K562 (cell line): ENCODE measurements at regions of chr20 and their contacts with region 1.

Region 1: GRCh38 chr20:10524643-10525042 is 89.5 kb downstream of the SLX4IP start:
- DNase-seq: no peak
- ATAC-seq: no peak
- H3K4me3 ChIP-seq: no peak overlapping the region
- H3K27ac ChIP-seq: no peak overlapping the region
- H3K4me1 ChIP-seq: peaks cover 0 to 7% of the 10 kb centered on the region in 2 experiments; a peak in 2 of 5 replicates
- H3K27me3 ChIP-seq: no peaks in the 10 kb centered on the region
- CTCF ChIP-seq: no peak
- EP300 ChIP-seq: no peak
- POLR2A ChIP-seq: no peak
- RAD21 ChIP-seq: no peak

Region 2: GRCh38 chr20:10357974-10358373 is 166.7 kb before region 1 on chr20:
- CTCF ChIA-PET with region 1: no interaction called
- POLR2A ChIA-PET with region 1: no interaction called
- in situ Hi-C with region 1: no loop called
- intact Hi-C with region 1: no loop called
- DNase-seq: peak in 2 of 4 experiments; percentile 4 to 14
- ATAC-seq: no peak
- H3K4me3 ChIP-seq: no peak overlapping the region
- H3K27ac ChIP-seq: no peak overlapping the region
- H3K4me1 ChIP-seq: no peaks in the 10 kb centered on the region
- H3K27me3 ChIP-seq: no peaks in the 10 kb centered on the region
- CTCF ChIP-seq: peak in 1 of 3 experiments; percentile 26; a peak in 2 of 6 replicates
- EP300 ChIP-seq: no peak
- POLR2A ChIP-seq: no peak
- RAD21 ChIP-seq: no peak; a peak in 1 of 4 replicates

Region 3: GRCh38 chr20:10476319-10476724 is 48.3 kb before region 1 on chr20:
- CTCF ChIA-PET with region 1: no interaction called
- POLR2A ChIA-PET with region 1: no interaction called
- in situ Hi-C with region 1: no loop called
- intact Hi-C with region 1: loop called (anchors 5 kb)
- DNase-seq: peak; percentile 19 to 49 (median 28)
- ATAC-seq: peak; percentile 87
- H3K4me3 ChIP-seq: no peak overlapping the region
- H3K27ac ChIP-seq: peak overlapping the region; percentile 41; the same call in 2 of the 3 replicates
- H3K4me1 ChIP-seq: peaks cover 0 to 16% of the 10 kb centered on the region in 2 experiments; a peak in 4 of 5 replicates
- H3K27me3 ChIP-seq: no peaks in the 10 kb centered on the region
- CTCF ChIP-seq: peak; percentile 12 to 46 (median 33); a peak in 3 of 6 replicates
- EP300 ChIP-seq: no peak
- POLR2A ChIP-seq: no peak
- RAD21 ChIP-seq: peak; percentile 33 to 47; a peak in 2 of 4 replicates

Region 4: DNA sequence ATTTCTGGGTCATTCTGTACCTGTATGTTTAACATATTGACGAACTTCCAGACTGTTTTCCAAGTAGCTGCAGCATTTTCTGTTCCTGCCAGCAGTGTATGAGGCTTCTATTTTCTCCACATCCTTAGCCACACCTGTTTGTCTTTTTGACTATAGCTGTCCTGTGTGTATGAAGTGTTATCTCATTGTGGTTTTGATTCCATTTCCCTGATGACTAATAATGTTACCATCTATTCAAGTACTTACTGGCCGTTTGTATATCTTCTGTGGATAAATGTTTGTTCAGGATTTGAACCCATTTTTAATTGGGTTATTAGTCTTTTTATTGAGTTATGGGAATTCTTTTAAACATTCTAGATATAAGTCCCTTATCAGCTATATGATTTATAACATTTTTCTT is 54.0 kb after region 1 on chr20:
- CTCF ChIA-PET with region 1: no interaction called
- POLR2A ChIA-PET with region 1: no interaction called
- in situ Hi-C with region 1: no loop called
- intact Hi-C with region 1: no loop called
- DNase-seq: no peak
- ATAC-seq: no peak
- H3K4me3 ChIP-seq: no peak overlapping the region
- H3K27ac ChIP-seq: no peak overlapping the region
- H3K4me1 ChIP-seq: no peaks in the 10 kb centered on the region
- H3K27me3 ChIP-seq: no peaks in the 10 kb centered on the region
- CTCF ChIP-seq: no peak
- EP300 ChIP-seq: no peak
- POLR2A ChIP-seq: no peak
- RAD21 ChIP-seq: no peak